ENCODE measurements at regions of chr2 and their contacts with region 1.

Region 1: DNA sequence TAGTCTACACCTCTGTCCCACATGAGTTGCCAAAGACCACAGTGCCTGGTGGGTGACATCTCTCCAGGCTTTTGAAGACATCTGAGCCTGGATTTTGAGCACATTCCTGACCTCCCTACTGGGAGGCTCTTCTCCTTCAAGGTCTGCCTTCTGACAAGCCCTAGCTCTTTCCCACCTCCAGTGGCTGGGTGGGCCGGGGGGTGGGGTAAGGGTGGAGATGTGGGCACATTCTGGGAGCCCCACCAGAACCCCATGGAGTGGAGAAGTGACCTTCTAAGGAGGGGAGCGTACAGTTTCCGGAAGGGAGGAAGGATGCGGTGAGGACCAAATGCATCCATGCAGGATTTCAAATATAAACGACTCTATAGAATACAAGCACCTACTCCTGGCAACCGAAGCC is 27.9 kb upstream of the ANXA4 start:
- DNase-seq: no peak
- ATAC-seq: no peak
- H3K4me3 ChIP-seq: no peak overlapping the region
- H3K27ac ChIP-seq: no peak overlapping the region
- H3K4me1 ChIP-seq: peaks cover 0 to 8% of the 10 kb centered on the region in 2 donors
- H3K27me3 ChIP-seq: no peaks in the 10 kb centered on the region
- CTCF ChIP-seq: no peak

Region 2: GRCh38 chr2:69559442-69560146 is 154.4 kb before region 1 on chr2:
- intact Hi-C with region 1: loop called in 1 of 2 experiments (anchors 5 kb)
- DNase-seq: no peak
- ATAC-seq: peak; percentile 90
- H3K4me3 ChIP-seq: no peak overlapping the region
- H3K27ac ChIP-seq: no peak overlapping the region
- H3K4me1 ChIP-seq: peaks cover 0 to 38% of the 10 kb centered on the region in 2 donors
- H3K27me3 ChIP-seq: no peaks in the 10 kb centered on the region
- CTCF ChIP-seq: peak; percentile 43 to 63

Region 3: DNA sequence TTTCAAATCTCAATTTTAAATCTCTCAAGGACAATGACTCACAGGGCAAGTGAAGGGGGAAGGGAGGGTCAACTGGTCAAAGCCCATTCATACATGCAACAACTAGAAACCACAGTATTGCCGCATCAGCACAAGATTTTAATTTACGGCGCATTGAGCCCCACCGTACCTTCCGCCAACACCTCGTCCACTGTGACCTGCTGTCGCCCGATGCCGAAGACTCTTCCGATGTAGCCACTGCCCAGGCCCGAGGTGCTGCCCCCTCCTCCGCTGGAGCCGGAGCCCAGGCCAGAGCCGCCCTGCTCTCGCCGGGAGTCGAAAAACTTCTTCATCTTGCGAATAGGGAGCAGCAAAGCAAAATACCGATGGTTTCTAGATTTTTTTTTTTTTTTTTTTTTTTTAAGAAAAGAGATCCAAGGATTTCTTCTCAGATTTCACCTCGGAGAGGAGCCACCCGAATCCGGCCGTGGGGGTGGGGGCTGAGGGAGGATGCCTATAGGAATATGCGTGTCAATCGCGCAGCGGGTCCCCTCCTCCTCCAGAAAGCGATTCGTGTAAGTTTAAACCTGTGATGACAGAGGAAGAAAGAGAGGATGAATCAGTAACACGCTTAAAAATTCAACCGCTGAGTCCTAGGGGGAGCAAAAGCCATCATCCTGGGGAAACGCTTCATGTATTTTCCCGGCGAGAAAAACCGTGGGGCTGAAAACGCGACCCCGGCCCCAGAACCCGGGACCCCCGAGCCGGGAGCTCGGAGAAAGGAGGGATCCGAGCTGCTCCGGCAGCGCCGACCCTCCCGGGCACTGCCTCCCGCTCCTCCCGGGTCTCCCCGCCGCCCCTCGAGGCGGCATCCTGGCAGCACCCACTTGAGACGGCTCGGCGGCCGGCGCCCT is 71.1 kb before region 1 on chr2:
- intact Hi-C with region 1: no loop called
- DNase-seq: peak; percentile 47 to 85 (median 74)
- ATAC-seq: peak; percentile 28
- H3K4me3 ChIP-seq: peak overlapping the region; percentile 84 to 94
- H3K27ac ChIP-seq: peak overlapping the region; percentile 99
- H3K4me1 ChIP-seq: peaks cover 19 to 53% of the 10 kb centered on the region in 2 donors
- H3K27me3 ChIP-seq: no peaks in the 10 kb centered on the region
- CTCF ChIP-seq: no peak

Region 4: GRCh38 chr2:69863298-69863697 is 149.3 kb after region 1 on chr2:
- intact Hi-C with region 1: no loop called
- DNase-seq: no peak
- ATAC-seq: no peak
- H3K4me3 ChIP-seq: no peak overlapping the region
- H3K27ac ChIP-seq: no peak overlapping the region
- H3K4me1 ChIP-seq: no peaks in the 10 kb centered on the region
- H3K27me3 ChIP-seq: no peaks in the 10 kb centered on the region
- CTCF ChIP-seq: no peak

Measured in left lung (tissue), 14 donors.